ENCODE measurements at regions of chr9 and their contacts with region 1.

Region 1: DNA sequence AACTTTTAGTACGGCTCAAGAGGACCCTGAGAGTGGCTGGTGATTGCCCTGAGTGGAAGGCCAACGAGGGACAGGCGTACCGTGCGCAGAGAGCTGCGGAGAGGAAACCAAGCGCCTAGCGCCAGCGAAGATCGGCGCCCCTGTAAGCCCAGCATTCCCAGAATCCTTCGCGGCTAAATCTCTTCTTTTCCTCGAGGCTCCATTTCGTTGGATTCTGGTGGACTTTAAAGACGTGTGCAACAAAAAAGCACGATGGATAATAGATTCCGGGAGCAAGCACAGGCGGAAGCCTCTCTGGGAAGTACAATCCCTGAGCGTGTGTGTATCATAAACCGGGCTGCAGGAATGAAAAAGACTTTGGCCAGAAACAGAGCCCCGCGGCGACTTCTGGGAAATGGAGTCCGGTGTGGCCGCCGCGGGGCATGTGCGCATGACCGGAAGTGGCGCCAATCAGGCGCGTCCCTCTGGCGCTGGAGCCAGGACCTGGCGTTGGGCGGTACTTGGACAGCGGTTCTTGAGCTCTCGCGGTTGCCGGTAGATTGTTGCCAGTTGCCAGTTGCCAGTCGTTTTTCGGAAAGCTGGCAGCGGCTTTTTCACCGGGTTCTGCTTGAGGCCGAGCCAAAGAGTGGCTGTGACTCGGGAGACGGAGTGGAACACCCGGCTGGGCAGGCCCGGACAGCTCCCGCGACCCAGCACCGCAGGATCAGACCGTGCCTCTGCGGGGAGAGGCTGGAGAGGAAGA is at the start of gene ZNF79:
- DNase-seq: peak; percentile 33
- H3K4me3 ChIP-seq: peak within 1 kb of the TSS; percentile 94
- CTCF ChIP-seq: no peak

Region 2: DNA sequence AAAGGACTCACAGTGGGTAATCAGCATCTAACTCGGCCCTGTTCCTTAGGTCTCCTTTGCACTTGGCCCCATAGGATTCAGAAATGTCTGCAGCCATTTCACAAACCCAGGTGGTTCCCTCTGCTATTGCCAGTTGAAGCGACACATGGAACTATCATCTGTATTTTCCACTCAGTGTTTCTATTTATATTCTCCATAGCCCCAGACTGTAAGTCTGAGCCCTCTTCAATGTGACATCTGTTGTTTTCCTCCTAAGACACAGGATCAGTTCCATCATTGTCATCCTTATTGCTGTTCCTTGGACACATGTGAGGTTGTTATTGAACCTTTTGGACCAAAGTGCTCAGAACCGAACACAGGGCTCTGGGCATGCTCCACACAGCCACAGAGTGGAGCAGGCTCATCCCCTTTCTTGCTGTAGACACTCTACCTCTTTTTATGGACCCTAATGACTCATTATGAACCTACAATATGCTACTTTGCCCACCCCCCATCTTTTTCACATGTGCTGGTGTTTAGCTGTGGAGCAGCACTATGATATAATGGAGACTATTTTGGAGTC is 123.1 kb before region 1 on chr9:
- CTCF ChIA-PET with region 1: no interaction called
- POLR2A ChIA-PET with region 1: no interaction called
- DNase-seq: no peak
- H3K4me3 ChIP-seq: no peak overlapping the region
- CTCF ChIP-seq: no peak

Region 3: GRCh38 chr9:127450830-127451724 is 27.0 kb after region 1 on chr9 and contains the starts of genes LRSAM1 and RPL12:
- CTCF ChIA-PET with region 1: no interaction called
- POLR2A ChIA-PET with region 1: interaction called, 19 read pairs
- DNase-seq: peak; percentile 60
- H3K4me3 ChIP-seq: peak within 1 kb of the TSS; percentile 98
- CTCF ChIP-seq: no peak

Measured in AG04449 (cell line).